IMR-90 (cell line): ENCODE measurements at regions of chr2 and their contacts with region 1.

Region 1: GRCh38 chr2:65164426-65164891 is 34.6 kb upstream of the RAB1A start:
- DNase-seq: peak; percentile 19
- ATAC-seq: no peak
- H3K4me3 ChIP-seq: no peak overlapping the region
- H3K27ac ChIP-seq: no peak overlapping the region
- H3K4me1 ChIP-seq: no peaks in the 10 kb centered on the region
- H3K27me3 ChIP-seq: peaks cover 6% of the 10 kb centered on the region
- CTCF ChIP-seq: no peak
- POLR2A ChIP-seq: no peak
- RAD21 ChIP-seq: no peak

Region 2: GRCh38 chr2:64626963-64627760 is 537.3 kb before region 1 on chr2:
- CTCF ChIA-PET with region 1: no interaction called
- POLR2A ChIA-PET with region 1: no interaction called
- dilution Hi-C with region 1: no loop called
- in situ Hi-C with region 1: no loop called
- intact Hi-C with region 1: no loop called
- DNase-seq: no peak
- ATAC-seq: no peak
- H3K4me3 ChIP-seq: no peak overlapping the region
- H3K27ac ChIP-seq: no peak overlapping the region
- H3K4me1 ChIP-seq: no peaks in the 10 kb centered on the region; the same call in 1 of the 2 replicates
- H3K27me3 ChIP-seq: peaks cover 31% of the 10 kb centered on the region
- CTCF ChIP-seq: no peak
- POLR2A ChIP-seq: no peak
- RAD21 ChIP-seq: no peak

Region 3: DNA sequence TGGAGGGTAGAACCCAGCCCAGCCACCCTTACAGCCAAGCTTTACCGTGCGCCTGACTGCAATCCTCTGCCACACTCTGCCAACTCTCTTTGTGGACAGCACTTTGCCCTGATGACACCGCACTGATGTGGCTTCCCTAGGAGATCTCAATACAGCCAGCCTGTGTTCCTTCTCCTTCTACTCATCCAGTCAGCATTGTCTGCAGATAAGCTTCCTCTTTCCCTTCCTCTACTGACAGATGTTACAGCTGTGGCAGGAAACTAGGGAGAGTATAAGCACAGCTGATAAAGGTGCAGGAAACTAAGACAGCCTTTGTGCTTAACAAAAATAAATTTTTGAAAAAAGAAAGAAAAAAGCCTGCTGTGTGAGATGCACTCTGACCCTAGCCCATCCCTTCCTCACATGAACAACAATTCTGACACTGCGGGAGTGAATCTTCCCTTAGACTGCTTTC is 83.2 kb before region 1 on chr2:
- CTCF ChIA-PET with region 1: no interaction called
- POLR2A ChIA-PET with region 1: no interaction called
- dilution Hi-C with region 1: no loop called
- in situ Hi-C with region 1: no loop called
- intact Hi-C with region 1: loop called (anchors 5 kb)
- DNase-seq: no peak
- ATAC-seq: no peak
- H3K4me3 ChIP-seq: no peak overlapping the region
- H3K27ac ChIP-seq: no peak overlapping the region
- H3K4me1 ChIP-seq: peaks cover 4% of the 10 kb centered on the region
- H3K27me3 ChIP-seq: no peaks in the 10 kb centered on the region
- CTCF ChIP-seq: no peak
- POLR2A ChIP-seq: no peak
- RAD21 ChIP-seq: no peak

Region 4: GRCh38 chr2:65204461-65205210 is 40.2 kb after region 1 on chr2:
- CTCF ChIA-PET with region 1: no interaction called
- POLR2A ChIA-PET with region 1: no interaction called
- dilution Hi-C with region 1: no loop called
- in situ Hi-C with region 1: no loop called
- intact Hi-C with region 1: no loop called
- DNase-seq: no peak
- ATAC-seq: no peak
- H3K4me3 ChIP-seq: peak overlapping the region; percentile 50
- H3K27ac ChIP-seq: no peak overlapping the region
- H3K4me1 ChIP-seq: peaks cover 2% of the 10 kb centered on the region; the same call in 1 of the 2 replicates
- H3K27me3 ChIP-seq: no peaks in the 10 kb centered on the region
- CTCF ChIP-seq: no peak
- POLR2A ChIP-seq: no peak
- RAD21 ChIP-seq: no peak